MCF 10A (cell line): ENCODE measurements at regions of chr4 and their contacts with region 1.

Region 1: GRCh38 chr4:120156120-120156718 is 89.6 kb upstream of the MAD2L1 start:
- DNase-seq: peak; percentile 75
- H3K4me3 Mint-ChIP-seq: no peak overlapping the region
- H3K27ac Mint-ChIP-seq: no peak overlapping the region
- H3K4me1 Mint-ChIP-seq: no peaks in the 10 kb centered on the region
- H3K27me3 Mint-ChIP-seq: no peaks in the 10 kb centered on the region
- CTCF ChIP-seq: peak; percentile 60

Region 2: DNA sequence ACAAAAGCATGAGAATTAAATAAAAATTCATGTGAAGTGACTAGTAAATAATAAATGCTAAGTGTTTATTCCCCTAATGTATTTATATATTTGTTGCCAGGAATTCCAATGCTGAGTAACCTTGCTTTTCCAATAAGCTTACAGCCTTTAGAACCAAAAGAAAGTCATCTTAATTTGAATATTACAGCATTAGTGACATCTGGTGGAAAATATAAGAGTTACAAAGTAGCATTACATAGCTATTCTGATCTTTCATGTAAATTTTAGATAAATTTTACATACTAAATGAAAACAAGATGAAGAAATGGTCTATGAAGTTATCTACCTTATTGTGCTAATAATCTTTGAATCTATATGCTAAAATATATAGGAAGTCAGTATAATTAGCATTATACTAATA is 100.0 kb before region 1 on chr4:
- CTCF ChIA-PET with region 1: no interaction called
- POLR2A ChIA-PET with region 1: no interaction called
- intact Hi-C with region 1: no loop called
- DNase-seq: no peak
- H3K4me3 Mint-ChIP-seq: no peak overlapping the region
- H3K27ac Mint-ChIP-seq: no peak overlapping the region
- H3K4me1 Mint-ChIP-seq: peaks cover 8% of the 10 kb centered on the region
- H3K27me3 Mint-ChIP-seq: no peaks in the 10 kb centered on the region
- CTCF ChIP-seq: peak; percentile 7

Region 3: DNA sequence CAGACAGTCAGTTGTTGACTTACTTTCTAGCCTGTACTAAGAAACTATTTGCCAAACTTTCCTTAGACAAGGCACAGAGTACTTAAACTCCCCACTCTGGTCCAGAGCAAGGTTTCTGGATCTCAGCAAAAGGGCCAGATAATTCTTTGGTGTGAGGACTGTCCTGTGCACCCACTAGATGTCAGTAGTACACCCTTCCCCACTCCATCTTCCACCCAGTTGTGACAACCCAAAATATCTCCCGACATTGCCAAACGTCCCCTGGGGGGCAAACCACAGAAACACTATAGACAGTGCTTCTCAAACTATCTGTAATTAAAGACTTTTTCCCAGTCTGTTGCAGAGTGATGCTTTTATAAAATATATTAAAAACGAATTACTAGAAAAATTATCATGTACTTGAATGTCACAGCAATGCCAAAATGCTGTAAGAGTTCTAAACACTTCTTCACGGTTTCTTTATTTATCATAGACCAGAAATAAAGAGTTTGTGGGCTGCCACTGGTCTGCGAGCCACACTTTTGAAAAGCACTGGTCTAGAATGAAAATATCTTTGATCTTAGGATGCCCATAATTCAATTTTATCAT is 562.9 kb after region 1 on chr4:
- CTCF ChIA-PET with region 1: interaction called, 13 read pairs
- POLR2A ChIA-PET with region 1: no interaction called
- intact Hi-C with region 1: loop called (anchors 1 kb)
- DNase-seq: peak; percentile 56
- H3K4me3 Mint-ChIP-seq: no peak overlapping the region
- H3K27ac Mint-ChIP-seq: no peak overlapping the region
- H3K4me1 Mint-ChIP-seq: no peaks in the 10 kb centered on the region
- H3K27me3 Mint-ChIP-seq: no peaks in the 10 kb centered on the region
- CTCF ChIP-seq: peak; percentile 59

Region 4: DNA sequence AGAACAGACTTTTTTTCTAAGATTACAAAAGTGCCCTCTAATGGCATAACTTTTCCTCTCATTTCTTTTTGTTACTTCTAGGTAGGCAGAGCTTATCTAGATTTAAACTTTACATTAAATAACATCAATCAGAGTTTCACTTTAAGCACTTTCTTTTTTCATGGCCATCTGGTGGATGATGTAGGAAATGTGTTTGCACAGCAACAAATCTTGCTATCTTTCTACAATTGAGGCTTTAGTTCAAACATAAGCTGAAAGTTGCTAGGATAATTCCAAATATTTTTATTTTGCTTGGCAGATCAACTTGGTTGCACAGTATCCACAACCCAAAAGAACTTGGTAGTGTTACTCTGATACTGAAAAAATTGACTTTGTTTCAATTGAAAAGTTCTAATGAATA is 894.1 kb after region 1 on chr4:
- CTCF ChIA-PET with region 1: interaction called, 4 read pairs
- POLR2A ChIA-PET with region 1: no interaction called
- intact Hi-C with region 1: loop called (anchors 1 kb)
- DNase-seq: no peak
- H3K4me3 Mint-ChIP-seq: no peak overlapping the region
- H3K27ac Mint-ChIP-seq: peak overlapping the region; percentile 19
- H3K4me1 Mint-ChIP-seq: peaks cover 12% of the 10 kb centered on the region
- H3K27me3 Mint-ChIP-seq: no peaks in the 10 kb centered on the region
- CTCF ChIP-seq: no peak

Region 5: GRCh38 chr4:121112530-121112929 is 956.3 kb after region 1 on chr4:
- CTCF ChIA-PET with region 1: interaction called, 8 read pairs
- POLR2A ChIA-PET with region 1: no interaction called
- intact Hi-C with region 1: loop called (anchors 5 kb)
- DNase-seq: peak; percentile 8
- H3K4me3 Mint-ChIP-seq: no peak overlapping the region
- H3K27ac Mint-ChIP-seq: no peak overlapping the region
- H3K4me1 Mint-ChIP-seq: no peaks in the 10 kb centered on the region
- H3K27me3 Mint-ChIP-seq: no peaks in the 10 kb centered on the region
- CTCF ChIP-seq: no peak